Mucosa of descending colon (tissue), 3 donors: ENCODE measurements at regions of chr12 and their contacts with region 1.

Region 1: DNA sequence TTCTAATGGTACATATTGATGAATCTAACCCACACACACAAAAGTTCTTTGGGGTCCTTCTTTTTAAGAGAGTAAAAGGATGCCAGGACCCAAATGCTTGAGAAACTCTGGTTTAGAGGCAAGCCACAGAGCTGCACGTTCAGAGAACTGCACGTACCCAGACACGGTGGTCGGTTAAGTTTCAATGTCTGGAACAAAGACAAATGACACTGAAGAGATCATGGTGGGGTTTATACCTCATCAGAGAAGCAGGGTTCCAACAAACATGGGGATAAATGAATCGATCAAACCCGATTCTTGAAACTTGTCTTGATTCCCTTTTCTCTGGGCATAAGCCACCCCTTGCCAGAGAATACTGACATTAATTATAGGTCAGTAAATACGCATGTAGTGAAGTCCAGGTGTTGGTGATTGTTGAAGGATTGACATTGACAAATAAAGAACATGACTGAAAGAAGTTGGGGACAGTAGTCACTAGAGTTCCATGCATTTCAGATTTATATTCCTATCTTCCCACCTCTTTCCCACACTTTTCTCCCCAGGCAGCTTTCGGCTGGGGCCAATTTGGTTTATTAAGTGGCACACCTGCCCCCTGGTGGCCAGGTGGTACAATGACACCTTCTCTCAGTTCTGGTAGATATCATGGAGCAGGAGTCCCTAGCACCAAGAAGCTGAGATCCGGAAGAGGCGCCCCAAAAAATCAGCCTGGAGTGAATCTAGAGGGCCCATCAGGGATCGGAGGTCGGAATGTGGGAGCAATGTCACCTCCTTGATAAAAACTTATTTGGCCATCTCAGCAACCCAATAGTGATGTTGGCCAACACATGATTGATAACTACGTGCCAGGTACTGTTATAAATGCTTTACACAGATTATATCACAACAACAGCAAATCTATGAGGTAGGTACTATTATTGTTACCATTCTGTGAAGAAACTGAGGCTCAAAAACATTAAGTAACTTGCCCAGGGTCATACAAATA is 17.8 kb upstream of the HDAC7 start:
- DNase-seq: peak; percentile 59 to 76 (median 63)
- ATAC-seq: peak; percentile 76
- H3K4me3 ChIP-seq: no peak overlapping the region
- H3K4me1 ChIP-seq: no peaks in the 10 kb centered on the region
- CTCF ChIP-seq: peak; percentile 85

Region 2: DNA sequence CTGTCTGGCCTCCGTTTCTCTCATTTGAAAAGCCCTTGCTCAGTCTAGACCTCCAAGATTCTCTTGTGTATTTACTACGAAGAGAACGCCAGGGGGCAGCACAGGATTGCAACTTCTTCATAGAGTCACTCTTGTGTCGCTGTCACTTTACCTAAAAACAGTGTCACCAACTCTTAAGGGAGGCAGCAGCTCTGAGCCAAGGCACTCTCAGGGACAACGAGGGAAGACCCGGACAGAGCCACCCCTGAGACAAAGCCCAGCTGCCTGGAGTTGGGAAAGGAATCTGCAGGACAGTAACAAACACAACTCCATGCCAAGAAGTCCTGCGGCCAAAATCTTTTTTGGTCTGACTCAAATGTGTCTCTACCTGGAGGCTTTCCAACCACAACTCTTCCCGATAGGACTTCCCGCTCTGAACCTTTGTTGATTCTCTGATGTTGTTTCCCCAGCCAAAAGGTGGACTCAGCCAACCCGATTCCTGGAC is 122.0 kb before region 1 on chr12:
- intact Hi-C with region 1: loop called (anchors 10 kb)
- DNase-seq: peak in 2 of 3 donors; percentile 60 to 79
- ATAC-seq: peak; percentile 65
- H3K4me3 ChIP-seq: no peak overlapping the region
- H3K4me1 ChIP-seq: peaks cover 11% of the 10 kb centered on the region
- CTCF ChIP-seq: peak; percentile 63

Region 3: GRCh38 chr12:47742253-47742825 is 95.1 kb before region 1 on chr12:
- intact Hi-C with region 1: loop called in 1 of 2 experiments (anchors 10 kb)
- DNase-seq: peak; percentile 65 to 85 (median 77)
- ATAC-seq: peak; percentile 52
- H3K4me3 ChIP-seq: no peak overlapping the region
- H3K4me1 ChIP-seq: peaks cover 14% of the 10 kb centered on the region
- CTCF ChIP-seq: peak; percentile 94

Region 4: DNA sequence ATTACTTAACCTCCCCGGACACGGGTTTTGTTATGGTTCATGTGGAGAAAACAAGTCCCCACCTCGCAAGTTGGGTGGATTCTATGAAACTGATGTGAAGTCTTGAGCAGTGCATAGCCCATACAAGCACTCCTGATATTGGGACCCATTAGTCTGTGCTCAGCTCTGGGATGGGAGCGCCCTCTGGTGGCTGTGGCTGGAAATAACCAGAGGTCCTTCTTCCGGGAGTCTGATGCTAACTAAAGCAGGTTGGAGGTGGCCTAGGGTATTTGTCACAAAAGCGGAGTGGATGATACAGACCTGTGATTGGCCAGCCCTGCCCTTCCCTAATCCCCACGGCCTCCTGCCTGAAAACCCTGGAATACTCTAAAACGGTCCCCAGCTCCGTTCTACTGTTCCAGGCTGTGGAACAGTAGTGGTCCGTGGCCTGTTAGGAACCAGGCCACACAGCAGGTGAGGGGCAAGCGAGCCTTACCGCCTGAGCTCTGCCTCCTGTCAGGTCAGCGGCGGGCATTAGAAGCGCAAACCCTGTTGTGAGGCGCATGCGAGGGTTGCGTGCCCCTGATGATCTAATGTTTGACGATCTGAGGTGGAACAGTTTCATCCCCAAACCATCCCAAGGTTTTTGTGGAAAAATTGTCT is 58.1 kb before region 1 on chr12:
- intact Hi-C with region 1: loop called in 1 of 2 experiments (anchors 10 kb)
- DNase-seq: peak; percentile 86 to 94 (median 93)
- ATAC-seq: peak; percentile 88
- H3K4me3 ChIP-seq: no peak overlapping the region
- H3K4me1 ChIP-seq: peaks cover 6% of the 10 kb centered on the region
- CTCF ChIP-seq: peak; percentile 87

Region 5: GRCh38 chr12:47785036-47785886 is 52.2 kb before region 1 on chr12:
- intact Hi-C with region 1: loop called in 1 of 2 experiments (anchors 5 kb)
- DNase-seq: peak in 1 of 3 donors; percentile 42
- ATAC-seq: no peak
- H3K4me3 ChIP-seq: no peak overlapping the region
- H3K4me1 ChIP-seq: no peaks in the 10 kb centered on the region
- CTCF ChIP-seq: no peak

Region 6: DNA sequence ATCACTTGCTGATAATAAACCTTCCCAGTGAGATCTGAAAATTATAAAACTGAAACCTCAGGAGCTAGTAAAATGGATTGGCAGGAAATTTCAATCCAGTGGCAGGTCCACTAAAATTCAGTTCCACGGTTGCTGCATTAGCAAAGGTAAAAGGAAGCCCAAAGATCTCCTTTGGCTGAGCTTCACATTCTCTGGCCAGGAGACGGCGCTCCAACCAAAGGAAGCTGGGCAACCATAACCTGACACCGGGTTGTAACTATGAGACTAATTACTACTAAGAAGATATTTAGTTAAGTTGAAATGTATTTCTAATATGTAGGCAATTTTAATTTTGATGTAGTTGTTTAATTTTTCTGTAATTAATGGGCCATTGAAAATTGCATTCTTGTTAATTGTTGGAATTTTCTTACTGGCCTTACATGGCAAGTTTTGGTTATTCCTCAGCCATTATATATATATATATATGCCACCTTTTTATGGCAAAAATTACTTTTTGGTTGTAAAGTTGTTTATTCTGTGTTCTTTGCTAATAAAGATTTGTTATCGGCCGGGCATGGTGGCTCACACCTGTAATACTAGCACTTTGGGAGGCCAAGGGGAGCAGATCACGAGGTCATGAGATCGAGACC is 704.9 kb after region 1 on chr12:
- intact Hi-C with region 1: no loop called
- DNase-seq: peak in 2 of 3 donors; percentile 64 to 76
- ATAC-seq: peak; percentile 62
- H3K4me3 ChIP-seq: no peak overlapping the region
- H3K4me1 ChIP-seq: no peaks in the 10 kb centered on the region
- CTCF ChIP-seq: peak; percentile 40